Calu3 (cell line): ENCODE measurements at regions of chrX and their contacts with region 1.

Region 1: GRCh38 chrX:11953615-11954014 is 184.7 kb upstream of the FRMPD4 start:
- DNase-seq: peak; percentile 49
- H3K4me3 Mint-ChIP-seq: peak overlapping the region; percentile 11
- H3K27ac Mint-ChIP-seq: peak overlapping the region; percentile 95
- H3K4me1 Mint-ChIP-seq: peaks cover 22% of the 10 kb centered on the region
- H3K27me3 Mint-ChIP-seq: no peaks in the 10 kb centered on the region
- CTCF ChIP-seq: no peak

Region 2: GRCh38 chrX:11899091-11899490 is 54.5 kb before region 1 on chrX:
- CTCF ChIA-PET with region 1: no interaction called
- intact Hi-C with region 1: loop called (anchors 2 kb)
- DNase-seq: peak; percentile 1
- H3K4me3 Mint-ChIP-seq: no peak overlapping the region
- H3K27ac Mint-ChIP-seq: peak overlapping the region; percentile 72
- H3K4me1 Mint-ChIP-seq: peaks cover 43% of the 10 kb centered on the region
- H3K27me3 Mint-ChIP-seq: no peaks in the 10 kb centered on the region
- CTCF ChIP-seq: no peak